Activated CD4-positive, alpha-beta T cell treated with anti-CD3 and anti-CD28 coated beads, Interleukin-2, amount 10 ng/mL, durations not matched to agents 24 days and 14 days (primary cell): ENCODE measurements at regions of chr1 and their contacts with region 1.

Region 1: GRCh38 chr1:235504496-235505222 is 407 bp upstream of the B3GALNT2 start:
- DNase-seq: peak; percentile 99
- H3K4me3 Mint-ChIP-seq: peak overlapping the region; percentile 95
- H3K27ac Mint-ChIP-seq: peak overlapping the region; percentile 97
- H3K4me1 Mint-ChIP-seq: peaks cover 25% of the 10 kb centered on the region
- H3K27me3 Mint-ChIP-seq: peaks cover 6% of the 10 kb centered on the region

Region 2: GRCh38 chr1:234486498-234487448 is 1017.9 kb before region 1 on chr1:
- intact Hi-C with region 1: loop called (anchors 5 kb)
- DNase-seq: peak; percentile 83
- H3K4me3 Mint-ChIP-seq: peak overlapping the region; percentile 68
- H3K27ac Mint-ChIP-seq: peak overlapping the region; percentile 96
- H3K4me1 Mint-ChIP-seq: peaks cover 35% of the 10 kb centered on the region
- H3K27me3 Mint-ChIP-seq: peaks cover 12% of the 10 kb centered on the region

Region 3: DNA sequence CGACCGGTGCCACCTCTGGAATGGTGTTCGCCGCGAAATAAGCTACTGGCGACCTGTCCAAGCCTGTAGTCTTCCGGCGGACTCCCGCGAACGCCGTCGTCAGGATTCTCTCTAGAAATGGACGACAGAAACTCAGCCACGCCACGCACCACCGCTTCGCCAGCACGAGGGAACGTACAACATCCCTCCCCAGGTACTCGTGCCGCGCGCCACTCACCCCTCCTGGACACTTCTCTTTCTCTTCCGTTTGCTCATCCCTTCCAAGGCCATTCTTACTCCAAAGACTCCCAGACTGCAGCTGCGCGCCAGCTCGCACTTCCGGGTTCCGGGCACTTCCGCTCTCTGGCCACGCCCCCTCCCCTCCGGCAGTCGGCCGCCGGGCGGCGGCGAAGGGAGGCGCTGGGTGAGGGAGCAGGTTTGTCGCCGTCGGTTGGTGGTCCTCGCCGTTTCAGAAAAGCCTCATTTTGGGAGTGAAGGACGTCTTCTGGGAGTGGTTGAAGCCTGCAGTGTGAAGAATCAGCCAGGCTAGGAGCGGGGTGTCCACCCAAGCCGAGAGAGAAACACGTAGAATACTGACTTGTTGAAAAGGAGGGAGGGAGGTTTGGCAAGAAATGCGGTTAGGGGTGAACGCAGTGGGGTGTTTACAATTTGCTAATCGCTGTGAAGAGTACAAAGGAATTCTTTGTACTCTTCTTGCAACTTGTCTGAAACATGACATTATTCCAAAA is 343.5 kb before region 1 on chr1 and contains the start of gene RBM34:
- intact Hi-C with region 1: loop called (anchors 2 kb)
- DNase-seq: peak; percentile 98
- H3K4me3 Mint-ChIP-seq: peak within 1 kb of the TSS; percentile 93
- H3K27ac Mint-ChIP-seq: peak within 1 kb of the TSS; percentile 94
- H3K4me1 Mint-ChIP-seq: peaks cover 12% of the 10 kb centered on the region
- H3K27me3 Mint-ChIP-seq: no peaks in the 10 kb centered on the region
- total RNA-seq, gene RBM34: 123 and 135 TPM in 2 replicates

Region 4: GRCh38 chr1:235253219-235253962 is 251.3 kb before region 1 on chr1:
- intact Hi-C with region 1: loop called (anchors 10 kb)
- DNase-seq: peak; percentile 88
- H3K4me3 Mint-ChIP-seq: no peak overlapping the region
- H3K27ac Mint-ChIP-seq: no peak overlapping the region
- H3K4me1 Mint-ChIP-seq: peaks cover 21% of the 10 kb centered on the region
- H3K27me3 Mint-ChIP-seq: no peaks in the 10 kb centered on the region

Region 5: GRCh38 chr1:235545277-235545930 is 40.7 kb after region 1 on chr1:
- intact Hi-C with region 1: no loop called
- DNase-seq: no peak
- H3K4me3 Mint-ChIP-seq: no peak overlapping the region
- H3K27ac Mint-ChIP-seq: no peak overlapping the region
- H3K4me1 Mint-ChIP-seq: no peaks in the 10 kb centered on the region
- H3K27me3 Mint-ChIP-seq: peaks cover 9% of the 10 kb centered on the region

Region 6: DNA sequence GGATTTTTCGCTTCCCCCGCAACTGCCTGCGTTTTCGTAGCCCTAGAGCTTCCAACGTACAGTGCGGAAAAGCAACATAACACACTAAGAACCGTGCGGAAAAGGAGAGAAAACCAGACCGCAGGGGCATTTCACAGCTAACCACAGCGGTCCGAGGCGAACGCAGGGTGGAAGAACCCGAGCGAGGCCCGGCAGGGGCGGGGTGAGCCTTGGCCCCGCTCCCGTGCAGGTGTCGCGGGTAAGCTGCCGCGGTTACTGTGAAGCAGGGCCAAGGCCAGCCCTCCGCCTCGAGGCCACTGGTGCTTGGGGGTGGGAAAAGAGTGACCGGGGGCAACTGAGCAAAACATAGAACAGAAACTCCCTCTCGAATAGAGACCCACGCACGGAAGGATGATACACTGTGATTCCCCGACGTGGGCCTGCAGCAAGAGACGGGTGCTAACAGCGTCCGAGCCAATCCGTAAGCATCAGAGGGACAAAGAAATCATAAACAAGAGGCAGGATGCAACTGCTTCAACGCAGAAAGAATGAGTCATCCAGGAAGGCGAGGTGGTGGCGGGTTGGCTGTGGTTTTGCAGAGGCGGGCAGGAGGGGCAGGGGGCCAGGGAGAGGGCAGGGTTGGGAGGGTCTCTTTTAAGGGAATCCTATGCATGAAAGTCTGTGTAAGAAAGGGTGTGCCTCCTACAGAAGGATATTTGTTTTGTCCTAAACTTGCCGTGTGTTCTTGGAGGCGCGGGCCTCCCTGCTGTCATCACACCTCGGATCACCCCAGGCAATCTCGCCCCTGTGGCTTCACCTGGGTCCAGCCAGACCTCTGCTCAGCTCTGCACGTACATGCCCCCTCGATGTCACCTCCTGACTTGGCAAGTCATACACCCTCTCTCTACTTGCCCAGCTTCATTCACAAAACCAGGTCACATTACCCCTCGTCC is 137.6 kb after region 1 on chr1:
- intact Hi-C with region 1: loop called (anchors 2 kb)
- DNase-seq: peak; percentile 93
- H3K4me3 Mint-ChIP-seq: peak overlapping the region; percentile 87
- H3K27ac Mint-ChIP-seq: peak overlapping the region; percentile 99
- H3K4me1 Mint-ChIP-seq: peaks cover 64% of the 10 kb centered on the region
- H3K27me3 Mint-ChIP-seq: peaks cover 23% of the 10 kb centered on the region

Region 7: DNA sequence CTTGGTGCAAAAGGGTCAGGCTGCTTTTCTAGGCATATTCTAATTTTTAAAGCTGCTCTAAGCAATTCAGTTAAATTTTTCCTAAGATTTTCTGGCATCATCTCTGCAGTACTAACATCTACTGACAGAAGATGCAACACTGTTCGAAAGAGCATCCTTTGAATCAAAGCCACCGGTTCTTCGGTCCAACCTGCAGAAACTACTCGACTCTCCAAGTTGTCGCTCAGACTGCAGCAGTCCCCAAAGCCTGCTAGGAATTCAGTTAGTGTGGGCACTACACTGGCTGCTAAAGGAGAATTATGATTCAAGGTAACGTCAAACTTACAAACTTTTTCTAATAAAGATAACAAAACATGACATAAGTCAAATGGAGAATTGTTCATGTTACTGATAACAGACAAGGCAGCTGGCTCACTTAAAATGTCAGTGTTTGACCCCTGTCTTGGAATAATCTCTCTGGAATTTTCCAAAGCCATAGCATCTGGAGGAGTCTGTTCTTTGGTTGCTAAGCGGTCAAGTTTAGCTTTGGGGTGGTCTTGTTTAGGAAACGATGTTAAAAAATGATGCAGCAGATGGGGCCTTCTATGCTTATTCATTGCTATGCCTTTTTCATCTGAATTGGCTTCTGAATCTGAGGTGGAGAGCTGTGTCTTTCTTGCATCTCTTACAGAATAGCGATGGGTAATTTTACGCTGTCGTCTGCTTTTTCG is 305.2 kb after region 1 on chr1:
- intact Hi-C with region 1: no loop called
- DNase-seq: no peak
- H3K4me3 Mint-ChIP-seq: no peak overlapping the region
- H3K27ac Mint-ChIP-seq: no peak overlapping the region
- H3K4me1 Mint-ChIP-seq: no peaks in the 10 kb centered on the region
- H3K27me3 Mint-ChIP-seq: no peaks in the 10 kb centered on the region